Head of caudate nucleus (tissue), 42 donors: ENCODE measurements at regions of chr10 and their contacts with region 1.

Region 1: GRCh38 chr10:30534465-30535144 is 94.9 kb downstream of the LYZL2 start:
- DNase-seq: peak; percentile 18 to 89 (median 72)

Region 2: DNA sequence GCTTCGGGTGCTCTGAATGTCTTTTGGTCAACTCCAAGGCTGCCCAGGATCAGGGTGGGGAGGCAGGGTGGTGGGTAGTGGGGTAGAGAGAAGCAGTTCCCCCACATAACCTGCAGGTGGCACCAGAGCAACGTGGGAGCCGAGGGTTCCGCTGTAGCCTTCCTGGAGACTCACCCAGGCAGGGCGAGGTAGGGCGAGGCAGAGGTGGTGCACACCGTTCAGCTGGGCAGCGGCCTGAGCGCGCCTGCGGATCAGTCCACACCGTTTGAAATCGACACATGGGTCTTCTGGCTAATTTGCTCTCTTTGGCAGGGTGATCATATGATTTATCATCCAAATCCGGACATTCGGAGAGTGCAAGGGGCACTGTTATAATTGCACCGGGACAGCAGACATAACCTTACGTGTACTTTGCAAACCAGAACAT is 142.0 kb before region 1 on chr10:
- intact Hi-C with region 1: loop called (anchors 5 kb)
- DNase-seq: peak; percentile 26 to 88 (median 72)